Mammary epithelial cell (primary cell): ENCODE measurements at regions of chr6 and their contacts with region 1.

Region 1: DNA sequence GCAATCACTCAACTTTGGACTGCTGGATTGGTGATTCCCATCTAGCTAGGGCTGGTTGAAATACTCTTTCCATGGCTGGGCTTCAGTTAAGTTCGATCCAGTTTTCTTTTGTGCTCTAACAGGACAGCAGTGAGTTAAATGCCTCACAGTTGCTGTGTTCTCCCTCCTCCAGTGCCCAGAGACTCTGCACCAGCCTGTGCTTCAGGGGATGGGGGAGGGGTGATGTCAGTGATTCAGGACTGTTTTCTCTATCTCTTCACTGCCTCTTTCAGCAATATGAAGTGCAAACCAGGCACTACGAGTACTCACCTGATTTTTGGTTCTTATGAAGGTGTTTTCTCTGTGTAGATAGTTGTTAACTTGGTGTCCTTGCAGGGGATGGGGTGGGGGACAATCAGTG is 88.2 kb upstream of the FAM83B start:
- DNase-seq: no peak
- H3K4me3 ChIP-seq: no peak overlapping the region
- H3K27ac ChIP-seq: no peak overlapping the region
- H3K4me1 ChIP-seq: no peaks in the 10 kb centered on the region
- H3K27me3 ChIP-seq: no peaks in the 10 kb centered on the region
- CTCF ChIP-seq: no peak

Region 2: DNA sequence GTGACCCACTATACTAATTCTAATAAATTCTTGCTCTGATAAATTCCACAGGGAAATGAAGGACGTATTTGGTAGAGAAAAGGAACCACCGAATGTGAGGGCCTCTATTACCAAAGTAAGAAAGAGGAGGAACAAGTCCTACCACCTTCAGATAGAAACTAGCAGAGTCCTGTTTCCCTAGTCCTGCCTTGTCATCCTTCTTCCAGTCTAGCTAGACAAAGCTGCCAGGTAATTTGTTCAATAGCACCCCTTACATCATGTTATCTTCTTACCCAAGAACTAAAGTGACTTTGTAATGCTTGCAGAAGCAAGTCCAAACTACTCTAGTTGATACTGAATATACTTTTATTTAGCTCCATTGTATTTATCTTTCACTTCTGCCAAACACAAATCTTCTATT is 58.9 kb after region 1 on chr6:
- CTCF ChIA-PET with region 1: no interaction called
- dilution Hi-C with region 1: loop called (anchors 5 kb)
- in situ Hi-C with region 1: no loop called
- intact Hi-C with region 1: no loop called
- DNase-seq: peak; percentile 60
- H3K4me3 ChIP-seq: no peak overlapping the region
- H3K27ac ChIP-seq: no peak overlapping the region
- H3K4me1 ChIP-seq: no peaks in the 10 kb centered on the region
- H3K27me3 ChIP-seq: no peaks in the 10 kb centered on the region
- CTCF ChIP-seq: no peak